ENCODE measurements at regions of chr5 and their contacts with region 1.

Region 1: DNA sequence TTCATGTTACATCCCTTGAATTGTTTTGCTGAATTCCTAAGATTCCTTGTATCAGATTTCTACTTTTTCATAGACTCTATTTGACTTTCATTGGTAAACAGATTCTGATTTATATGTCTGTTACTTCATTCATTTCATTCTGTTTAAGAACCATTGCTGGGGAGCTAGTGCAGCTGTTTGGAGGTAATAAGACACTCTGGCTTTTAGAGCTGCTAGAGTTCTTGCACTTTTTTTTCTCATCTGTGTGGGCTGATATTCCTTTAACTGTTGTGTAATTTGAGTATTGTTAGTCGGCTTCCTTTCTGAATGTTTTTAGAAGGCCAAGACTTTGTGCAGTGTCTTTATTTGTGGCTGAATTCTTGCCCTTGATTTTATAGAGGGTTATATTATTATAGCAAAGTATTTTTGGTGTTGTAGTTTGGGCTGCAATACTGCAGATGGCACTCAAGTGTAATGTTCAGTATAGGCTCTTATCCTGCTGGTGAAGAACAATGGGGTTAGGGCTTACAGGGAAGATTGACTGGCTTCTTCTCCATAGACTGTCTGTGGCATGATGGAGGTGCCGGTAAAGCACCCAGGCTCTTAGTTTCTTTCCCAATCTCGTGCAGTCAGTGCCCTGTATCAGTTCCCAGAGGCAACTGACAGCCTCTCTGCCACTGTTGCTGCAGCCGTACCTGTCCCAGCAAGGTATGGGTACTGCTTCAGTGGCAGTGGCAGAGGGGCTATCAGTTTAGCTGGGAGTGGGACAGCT is 162.2 kb downstream of the OXCT1 start:
- DNase-seq: no peak
- H3K4me3 Mint-ChIP-seq: no peak overlapping the region
- H3K27ac Mint-ChIP-seq: no peak overlapping the region
- H3K4me1 Mint-ChIP-seq: no peaks in the 10 kb centered on the region
- H3K27me3 Mint-ChIP-seq: peaks cover 28% of the 10 kb centered on the region

Region 2: DNA sequence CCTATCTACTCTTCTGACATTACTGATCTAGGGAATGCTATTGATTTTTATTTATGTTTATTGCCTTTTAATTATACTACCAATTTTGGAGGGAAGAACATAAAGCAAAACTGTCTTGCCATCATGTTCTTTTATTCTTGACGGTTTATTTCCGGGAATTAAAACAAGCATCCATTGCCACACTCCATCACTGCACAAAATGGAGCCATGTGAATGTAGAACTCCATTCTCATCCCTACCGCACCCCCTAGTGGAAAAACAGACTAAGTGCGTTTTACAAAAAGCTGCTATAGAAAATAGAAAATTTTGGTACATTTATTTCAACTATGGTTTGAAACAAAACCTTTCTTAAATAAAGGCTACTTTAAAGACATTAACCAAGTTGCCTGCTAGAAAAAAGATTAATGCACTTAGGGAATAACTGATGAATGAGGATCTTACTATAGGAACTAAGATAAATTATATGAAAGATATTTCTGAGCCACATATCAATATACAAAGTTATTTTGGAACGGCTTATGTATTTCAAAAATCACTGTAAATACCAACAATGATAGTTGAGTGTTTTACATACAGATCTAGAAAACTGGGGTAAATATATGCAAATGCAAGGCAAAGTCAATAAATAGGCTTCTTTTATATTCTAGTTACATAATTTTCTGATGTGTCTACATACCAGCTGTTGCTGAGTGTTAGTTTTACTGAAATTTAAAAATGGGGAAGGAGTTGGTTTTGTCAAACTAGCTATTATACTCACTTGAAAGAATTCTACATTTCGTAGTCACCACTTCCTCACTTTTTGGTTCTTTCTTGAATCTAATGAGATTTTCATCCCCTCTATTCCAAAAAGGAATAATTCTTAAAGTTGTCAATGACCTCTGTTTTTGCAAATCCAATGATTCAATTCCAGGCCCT is 135.7 kb after region 1 on chr5:
- intact Hi-C with region 1: loop called (anchors 1 kb)
- DNase-seq: peak; percentile 77
- H3K4me3 Mint-ChIP-seq: no peak overlapping the region
- H3K27ac Mint-ChIP-seq: no peak overlapping the region
- H3K4me1 Mint-ChIP-seq: peaks cover 7% of the 10 kb centered on the region
- H3K27me3 Mint-ChIP-seq: no peaks in the 10 kb centered on the region

Region 3: DNA sequence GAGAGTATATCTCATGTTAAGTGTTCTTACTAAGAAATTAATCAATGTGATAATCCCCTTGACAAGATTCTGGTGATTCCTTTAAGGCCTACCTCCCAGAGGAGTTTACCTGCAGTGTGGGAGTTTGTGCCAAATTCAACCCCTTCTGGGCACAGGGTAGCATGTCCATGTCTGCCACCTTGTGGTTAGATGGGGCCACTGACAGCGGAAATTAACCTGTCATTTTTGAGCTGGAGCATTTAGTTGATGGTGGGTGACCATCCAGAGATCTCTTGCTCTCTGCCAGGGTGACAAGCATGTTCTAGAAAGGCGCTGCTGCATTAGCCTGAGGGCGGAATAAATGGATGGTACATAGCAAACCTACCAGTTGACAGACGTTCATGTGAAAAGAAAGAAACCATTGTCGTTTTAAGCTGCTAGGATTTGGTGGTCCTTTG is 349.2 kb after region 1 on chr5:
- intact Hi-C with region 1: loop called (anchors 1 kb)
- DNase-seq: peak; percentile 84
- H3K4me3 Mint-ChIP-seq: no peak overlapping the region
- H3K27ac Mint-ChIP-seq: no peak overlapping the region
- H3K4me1 Mint-ChIP-seq: no peaks in the 10 kb centered on the region
- H3K27me3 Mint-ChIP-seq: peaks cover 8% of the 10 kb centered on the region

Region 4: DNA sequence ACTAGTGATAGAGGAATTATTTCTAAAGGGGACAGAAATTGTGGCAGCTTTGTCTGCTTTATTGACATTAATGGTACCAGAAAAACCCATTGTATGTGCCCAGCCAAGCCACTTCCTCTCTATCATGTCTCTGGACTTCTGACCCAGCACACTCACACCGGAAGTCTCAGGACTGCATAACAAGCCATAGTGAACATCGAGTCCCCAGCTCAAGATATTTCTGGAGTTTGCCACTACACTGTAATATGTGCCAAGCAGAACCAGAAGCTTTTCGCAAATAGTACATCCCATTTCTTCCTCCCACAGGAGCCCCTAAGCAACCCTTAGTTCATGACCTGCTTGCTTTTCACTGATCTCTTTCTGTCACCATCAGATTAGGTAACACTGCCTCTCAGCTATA is 527.8 kb after region 1 on chr5:
- intact Hi-C with region 1: no loop called
- DNase-seq: no peak
- H3K4me3 Mint-ChIP-seq: no peak overlapping the region
- H3K27ac Mint-ChIP-seq: no peak overlapping the region
- H3K4me1 Mint-ChIP-seq: no peaks in the 10 kb centered on the region
- H3K27me3 Mint-ChIP-seq: no peaks in the 10 kb centered on the region

Region 5: GRCh38 chr5:42583322-42583721 is 875.3 kb after region 1 on chr5:
- intact Hi-C with region 1: loop called (anchors 5 kb)
- DNase-seq: peak; percentile 80
- H3K4me3 Mint-ChIP-seq: no peak overlapping the region
- H3K27ac Mint-ChIP-seq: no peak overlapping the region
- H3K4me1 Mint-ChIP-seq: no peaks in the 10 kb centered on the region
- H3K27me3 Mint-ChIP-seq: peaks cover 14% of the 10 kb centered on the region

Measured in activated CD4-positive, alpha-beta T cell treated with anti-CD3 and anti-CD28 coated beads, Interleukin-2, amount 10 ng/mL, durations not matched to agents 24 days and 14 days (primary cell).